ENCODE measurements at regions of chr6 and their contacts with region 1.

Region 1: GRCh38 chr6:41424370-41425058 is 89.1 kb downstream of the NCR2 start:
- DNase-seq: peak; percentile 89
- ATAC-seq: peak; percentile 41
- H3K4me3 Mint-ChIP-seq: no peak overlapping the region
- H3K27ac Mint-ChIP-seq: no peak overlapping the region
- H3K4me1 Mint-ChIP-seq: peaks cover 12% of the 10 kb centered on the region
- H3K27me3 Mint-ChIP-seq: peaks cover 23% of the 10 kb centered on the region

Region 2: GRCh38 chr6:41531591-41532582 is 107.4 kb after region 1 on chr6:
- CTCF ChIA-PET with region 1: interaction called, 5 read pairs
- POLR2A ChIA-PET with region 1: no interaction called
- intact Hi-C with region 1: loop called in 1 of 2 experiments (anchors 5 kb)
- DNase-seq: peak; percentile 87
- ATAC-seq: peak; percentile 88
- H3K4me3 Mint-ChIP-seq: peak overlapping the region; percentile 64
- H3K27ac Mint-ChIP-seq: peak overlapping the region; percentile 93
- H3K4me1 Mint-ChIP-seq: peaks cover 35% of the 10 kb centered on the region
- H3K27me3 Mint-ChIP-seq: peaks cover 15% of the 10 kb centered on the region

Region 3: GRCh38 chr6:41545703-41546474 is 121.4 kb after region 1 on chr6 and contains the start of gene FOXP4:
- CTCF ChIA-PET with region 1: no interaction called
- POLR2A ChIA-PET with region 1: no interaction called
- intact Hi-C with region 1: loop called (anchors 1 kb)
- DNase-seq: peak; percentile 92
- ATAC-seq: peak; percentile 84
- H3K4me3 Mint-ChIP-seq: peak within 1 kb of the TSS; percentile 84
- H3K27ac Mint-ChIP-seq: peak within 1 kb of the TSS; percentile 92
- H3K4me1 Mint-ChIP-seq: peaks cover 15% of the 10 kb centered on the region
- H3K27me3 Mint-ChIP-seq: peaks cover 6% of the 10 kb centered on the region
- total RNA-seq, gene FOXP4: 11.1 to 13.8 TPM

Region 4: GRCh38 chr6:41591859-41592502 is 167.5 kb after region 1 on chr6:
- CTCF ChIA-PET with region 1: interaction called, 23 read pairs
- POLR2A ChIA-PET with region 1: no interaction called
- intact Hi-C with region 1: loop called (anchors 1 kb)
- DNase-seq: peak; percentile 87
- ATAC-seq: peak; percentile 85
- H3K4me3 Mint-ChIP-seq: no peak overlapping the region
- H3K27ac Mint-ChIP-seq: no peak overlapping the region
- H3K4me1 Mint-ChIP-seq: peaks cover 3% of the 10 kb centered on the region
- H3K27me3 Mint-ChIP-seq: no peaks in the 10 kb centered on the region

Region 5: DNA sequence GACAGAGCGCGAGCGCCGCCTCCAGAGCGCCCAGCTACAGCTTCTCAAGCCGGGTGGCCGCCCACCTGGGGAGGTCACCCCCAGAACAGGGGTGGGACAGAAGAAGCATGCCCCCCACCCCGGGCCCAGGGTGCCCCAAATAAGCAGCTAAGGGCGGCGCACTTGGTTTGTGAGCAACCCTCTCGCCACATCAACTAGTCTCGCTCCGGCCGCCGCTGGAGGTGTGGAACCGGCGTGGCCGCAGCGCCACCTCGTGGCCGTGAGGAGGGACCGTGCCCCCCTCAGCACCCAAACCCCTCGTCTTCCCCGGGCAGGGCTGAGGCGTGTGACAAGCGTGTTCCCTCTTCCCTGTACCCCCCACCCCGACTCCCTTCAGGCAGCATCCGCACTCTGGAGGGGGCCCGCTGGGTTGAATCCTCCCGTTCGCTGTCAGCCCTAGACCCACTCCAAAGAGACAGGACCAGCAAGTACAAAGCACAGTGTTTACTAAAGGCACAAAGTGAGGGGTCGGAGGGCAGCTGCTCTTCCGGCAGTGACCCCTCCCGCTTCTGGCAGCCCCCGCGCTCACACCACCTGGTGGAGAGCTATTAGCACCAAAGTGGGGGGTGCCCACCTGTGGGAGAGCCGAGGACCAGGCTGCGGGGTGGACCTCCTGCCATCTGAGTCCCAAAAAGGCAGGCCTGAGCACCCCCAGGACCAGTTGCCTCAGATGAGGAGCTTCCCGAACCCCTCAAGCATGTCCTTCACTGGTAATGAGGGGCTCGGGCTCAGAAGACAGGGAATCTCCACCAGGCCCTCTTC is 259.2 kb after region 1 on chr6:
- CTCF ChIA-PET with region 1: interaction called, 7 read pairs
- POLR2A ChIA-PET with region 1: no interaction called
- intact Hi-C with region 1: loop called (anchors 1 to 10 kb)
- DNase-seq: peak; percentile 90
- ATAC-seq: peak; percentile 92
- H3K4me3 Mint-ChIP-seq: peak overlapping the region; percentile 69
- H3K27ac Mint-ChIP-seq: peak overlapping the region; percentile 77
- H3K4me1 Mint-ChIP-seq: peaks cover 8% of the 10 kb centered on the region
- H3K27me3 Mint-ChIP-seq: no peaks in the 10 kb centered on the region

Region 6: DNA sequence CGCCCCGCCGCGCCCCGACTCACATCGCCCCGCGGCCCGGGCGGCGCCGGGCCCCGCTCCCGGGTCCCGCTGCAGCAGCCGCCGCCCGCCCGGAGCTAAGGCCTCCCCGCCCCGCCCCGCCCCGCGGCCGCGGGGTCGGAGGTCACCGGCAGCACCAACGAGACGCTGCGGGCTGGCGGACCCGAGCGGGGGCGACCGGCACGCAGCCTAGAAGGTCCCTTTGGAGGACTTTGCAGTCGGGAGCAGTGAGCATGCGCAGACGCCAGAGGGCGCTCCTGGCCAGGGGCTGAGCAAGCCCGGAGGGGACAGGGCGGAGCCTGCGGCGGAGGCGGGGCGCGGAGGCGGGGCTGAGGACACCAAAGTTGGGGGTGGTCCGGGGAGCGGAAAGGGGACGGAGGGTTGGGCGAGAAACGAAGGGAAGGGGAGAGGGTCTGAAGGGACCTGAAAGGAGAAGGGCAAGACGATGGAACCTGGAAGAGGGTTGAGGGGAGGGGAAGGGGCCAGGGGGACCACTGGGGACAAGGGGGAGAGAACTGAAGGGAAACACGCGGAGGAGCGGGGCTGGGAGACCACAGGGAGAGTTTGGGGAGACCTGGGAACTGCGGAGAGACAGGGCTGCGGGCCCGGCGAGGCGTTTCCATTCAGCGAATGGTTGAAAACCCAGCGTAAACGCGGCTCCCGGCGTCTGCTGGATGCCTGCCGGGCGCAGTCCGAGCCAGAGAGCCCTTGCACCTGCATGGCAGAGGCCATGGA is 355.5 kb after region 1 on chr6 and contains the start of gene FRS3:
- CTCF ChIA-PET with region 1: no interaction called
- POLR2A ChIA-PET with region 1: no interaction called
- intact Hi-C with region 1: no loop called
- DNase-seq: peak; percentile 100
- ATAC-seq: peak; percentile 98
- H3K4me3 Mint-ChIP-seq: peak within 1 kb of the TSS; percentile 85
- H3K27ac Mint-ChIP-seq: peak within 1 kb of the TSS; percentile 75
- H3K4me1 Mint-ChIP-seq: peaks cover 18% of the 10 kb centered on the region
- H3K27me3 Mint-ChIP-seq: peaks cover 7% of the 10 kb centered on the region
- total RNA-seq, gene FRS3: 4.8 to 5.6 TPM

Measured in activated CD4-positive, alpha-beta T cell treated with anti-CD3 and anti-CD28 coated beads for 36 hours (primary cell).